Activated CD4-positive, alpha-beta memory T cell treated with anti-CD3 and anti-CD28 coated beads for 36 hours (primary cell): ENCODE measurements at regions of chr22 and their contacts with region 1.

Region 1: DNA sequence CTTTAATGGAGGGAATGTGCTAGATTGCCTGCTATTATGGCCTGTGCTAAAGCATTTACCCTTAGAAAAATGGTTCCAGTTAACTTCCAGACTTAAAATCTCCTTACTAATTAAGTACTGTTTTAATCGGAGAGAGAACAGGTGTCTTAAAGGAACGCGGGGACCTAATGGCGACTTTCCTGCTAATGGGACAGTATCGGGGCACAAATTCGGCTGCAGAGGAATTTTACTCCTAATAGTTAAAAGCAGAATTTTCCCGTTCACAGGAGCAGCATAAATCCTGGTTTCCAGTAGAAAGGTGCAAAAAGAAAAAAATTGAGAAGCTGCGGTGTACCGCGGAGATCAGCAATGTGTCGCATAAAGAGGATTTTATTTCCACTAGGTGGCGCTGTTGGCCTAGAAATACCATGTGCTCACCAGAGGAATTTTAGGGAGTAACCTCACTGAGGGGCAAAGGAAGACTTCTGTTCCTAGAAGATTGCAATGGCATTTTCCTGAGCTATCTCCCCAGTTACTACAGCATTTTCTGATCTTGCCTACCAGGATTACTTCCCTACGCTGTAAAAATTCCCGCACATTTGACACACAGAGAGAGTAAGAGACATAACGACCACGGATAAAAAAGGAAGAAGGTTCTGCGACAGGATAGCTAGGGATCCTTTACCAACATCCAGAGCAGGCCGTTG is 44.5 kb downstream of the ZNF280B start:
- DNase-seq: peak; percentile 44
- H3K4me3 Mint-ChIP-seq: no peak overlapping the region
- H3K27ac Mint-ChIP-seq: no peak overlapping the region
- H3K4me1 Mint-ChIP-seq: no peaks in the 10 kb centered on the region
- H3K27me3 Mint-ChIP-seq: peaks cover 39% of the 10 kb centered on the region

Region 2: GRCh38 chr22:22446517-22446916 is 17.5 kb before region 1 on chr22:
- CTCF ChIA-PET with region 1: interaction called, 10 read pairs
- POLR2A ChIA-PET with region 1: no interaction called
- intact Hi-C with region 1: no loop called
- DNase-seq: no peak
- H3K4me3 Mint-ChIP-seq: no peak overlapping the region
- H3K27ac Mint-ChIP-seq: no peak overlapping the region
- H3K4me1 Mint-ChIP-seq: no peaks in the 10 kb centered on the region
- H3K27me3 Mint-ChIP-seq: peaks cover 36% of the 10 kb centered on the region

Region 3: DNA sequence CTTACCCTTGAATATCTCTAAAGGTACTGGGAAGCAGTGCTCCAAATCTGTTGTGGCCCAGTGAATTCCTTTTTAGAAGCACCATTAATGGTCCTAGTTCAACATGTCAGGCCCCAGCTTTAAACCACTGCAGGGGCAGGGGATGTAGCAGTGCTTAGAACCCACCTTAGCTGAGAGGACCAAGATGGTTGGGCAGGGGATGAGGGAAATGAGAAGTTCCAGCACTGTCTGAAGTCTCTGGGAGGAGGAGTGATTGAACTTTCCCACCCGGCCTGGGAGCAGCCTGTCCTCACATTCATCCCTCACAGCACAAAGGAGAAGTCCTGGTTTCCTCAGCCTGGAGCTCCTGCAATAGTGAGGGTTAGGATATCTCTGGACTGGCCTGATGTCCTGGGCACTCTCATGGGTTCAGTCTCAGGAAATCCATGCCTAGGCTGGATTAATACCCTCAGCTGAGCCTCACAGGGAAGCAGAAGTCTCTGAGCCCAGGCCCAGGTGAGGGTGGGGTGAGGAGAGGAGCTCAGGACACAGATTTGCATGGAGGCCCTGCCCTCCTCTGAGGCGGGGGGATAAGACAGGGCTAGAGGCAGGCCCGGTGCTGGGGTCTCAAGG is 123.7 kb after region 1 on chr22:
- CTCF ChIA-PET with region 1: interaction called, 16 read pairs
- POLR2A ChIA-PET with region 1: no interaction called
- intact Hi-C with region 1: loop called (anchors 1 kb)
- DNase-seq: no peak
- H3K4me3 Mint-ChIP-seq: no peak overlapping the region
- H3K27ac Mint-ChIP-seq: no peak overlapping the region
- H3K4me1 Mint-ChIP-seq: no peaks in the 10 kb centered on the region
- H3K27me3 Mint-ChIP-seq: peaks cover 19% of the 10 kb centered on the region